SK-MEL-5 (cell line): ENCODE measurements at regions of chr1 and their contacts with region 1.

Region 1: GRCh38 chr1:185412385-185413083 is 95.5 kb upstream of the IVNS1ABP start:
- DNase-seq: no peak

Region 2: DNA sequence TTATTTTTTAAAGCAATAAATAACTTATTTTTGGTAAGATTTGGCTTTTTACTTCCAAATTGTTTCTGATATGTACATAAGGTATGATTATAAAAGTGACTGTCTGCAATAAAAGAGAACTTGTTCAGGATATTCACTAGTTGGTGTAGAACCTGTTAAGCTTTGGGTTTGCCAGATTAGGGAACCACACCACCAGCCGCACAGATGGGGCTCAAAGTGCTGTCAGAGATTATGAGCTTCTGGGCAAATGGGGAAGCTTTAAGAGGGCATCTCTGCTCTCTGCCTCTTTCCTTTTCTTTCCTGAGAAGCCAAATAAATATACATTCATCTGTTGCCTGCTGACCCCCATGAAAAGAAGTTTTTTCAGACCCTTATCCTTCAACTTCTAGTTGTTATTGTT is 120.9 kb before region 1 on chr1:
- in situ Hi-C with region 1: loop called (anchors 10 kb)
- DNase-seq: no peak

Region 3: DNA sequence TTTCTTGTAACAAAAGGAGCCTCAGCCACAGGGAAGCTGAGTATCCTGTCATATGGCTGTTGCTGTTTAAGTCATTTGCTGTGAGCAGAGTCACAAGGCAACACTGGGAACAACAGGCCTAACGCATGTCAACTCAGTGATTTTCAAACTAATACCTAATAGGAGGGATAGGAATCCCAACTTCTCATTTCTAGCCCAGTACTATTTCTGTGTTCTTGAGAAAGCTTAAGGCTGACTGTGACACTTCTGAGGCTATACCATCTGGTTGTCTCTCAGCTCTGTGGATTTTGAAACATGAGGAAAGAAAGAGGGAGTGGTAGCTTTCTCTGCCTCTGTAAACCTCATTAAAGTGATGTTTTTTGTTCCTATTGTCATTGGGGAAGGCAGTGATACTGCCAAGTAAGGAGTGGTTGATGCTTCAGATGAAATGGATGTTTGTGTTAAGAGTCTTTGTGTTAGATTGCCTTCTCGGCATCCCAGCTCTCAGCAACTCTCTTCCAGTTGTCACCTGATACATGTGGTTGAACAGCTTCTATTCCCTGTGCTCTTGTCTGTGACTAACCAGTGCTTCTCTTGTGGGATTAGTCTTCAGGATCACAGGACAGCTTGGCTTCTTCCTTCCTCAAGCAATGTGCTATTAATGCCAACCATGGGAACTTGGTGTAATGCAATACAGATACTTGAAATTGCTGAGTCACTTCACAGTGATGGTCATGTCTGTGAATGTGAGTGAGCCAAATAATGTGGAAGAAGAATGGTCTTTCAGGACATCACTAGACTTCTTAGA is 71.3 kb after region 1 on chr1:
- in situ Hi-C with region 1: loop called (anchors 10 kb)
- DNase-seq: peak; percentile 98